HepG2 (cell line): ENCODE measurements at regions of chr6 and their contacts with region 1.

Region 1: DNA sequence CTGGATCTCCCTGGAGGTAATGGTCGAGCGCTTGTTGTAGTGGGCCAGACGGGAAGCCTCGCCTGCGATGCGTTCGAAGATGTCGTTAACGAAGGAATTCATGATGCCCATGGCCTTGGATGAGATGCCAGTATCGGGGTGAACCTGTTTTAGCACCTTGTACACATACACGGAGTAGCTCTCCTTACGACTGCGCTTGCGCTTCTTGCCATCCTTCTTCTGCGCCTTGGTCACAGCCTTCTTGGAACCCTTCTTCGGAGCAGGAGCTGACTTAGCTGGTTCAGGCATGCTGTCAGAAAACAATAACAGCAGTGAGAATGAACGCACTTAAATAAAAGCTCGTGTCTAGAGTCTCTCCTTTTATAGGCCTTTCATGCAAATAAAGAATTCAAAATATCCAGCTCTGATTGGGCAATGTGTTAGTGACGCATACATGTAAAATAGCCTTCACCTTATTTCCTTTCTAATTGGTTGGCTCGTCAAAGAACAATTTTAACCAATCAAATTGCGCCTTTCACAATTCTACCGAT is 129.2 kb downstream of the HFE start:
- DNase-seq: peak; percentile 99
- ATAC-seq: peak; percentile 64
- H3K4me3 ChIP-seq: peak overlapping the region; percentile 60 to 75 (median 72)
- H3K27ac ChIP-seq: peak overlapping the region; percentile 89
- H3K4me1 ChIP-seq: peaks cover 30% of the 10 kb centered on the region
- H3K27me3 ChIP-seq: no peaks in the 10 kb centered on the region; a peak in 1 of 5 replicates
- CTCF ChIP-seq: no peak
- EP300 ChIP-seq: peak in 1 of 2 experiments; percentile 48; a peak in 1 of 4 replicates
- POLR2A ChIP-seq: peak; percentile 97 to 99
- RAD21 ChIP-seq: peak; percentile 26; the same call in 1 of the 2 replicates

Region 2: GRCh38 chr6:26031595-26032339 is 184.7 kb before region 1 on chr6:
- CTCF ChIA-PET with region 1: no interaction called
- POLR2A ChIA-PET with region 1: interaction called, 40 read pairs
- in situ Hi-C with region 1: no loop called
- intact Hi-C with region 1: no loop called
- DNase-seq: peak; percentile 100
- ATAC-seq: peak; percentile 79
- H3K4me3 ChIP-seq: peak overlapping the region; percentile 71 to 83 (median 82)
- H3K27ac ChIP-seq: peak overlapping the region; percentile 93
- H3K4me1 ChIP-seq: peaks cover 37% of the 10 kb centered on the region
- H3K27me3 ChIP-seq: no peaks in the 10 kb centered on the region; a peak in 1 of 5 replicates
- CTCF ChIP-seq: peak; percentile 52
- EP300 ChIP-seq: peak; percentile 40 to 80; a peak in 2 of 4 replicates
- POLR2A ChIP-seq: peak; percentile 99
- RAD21 ChIP-seq: peak; percentile 61

Region 3: DNA sequence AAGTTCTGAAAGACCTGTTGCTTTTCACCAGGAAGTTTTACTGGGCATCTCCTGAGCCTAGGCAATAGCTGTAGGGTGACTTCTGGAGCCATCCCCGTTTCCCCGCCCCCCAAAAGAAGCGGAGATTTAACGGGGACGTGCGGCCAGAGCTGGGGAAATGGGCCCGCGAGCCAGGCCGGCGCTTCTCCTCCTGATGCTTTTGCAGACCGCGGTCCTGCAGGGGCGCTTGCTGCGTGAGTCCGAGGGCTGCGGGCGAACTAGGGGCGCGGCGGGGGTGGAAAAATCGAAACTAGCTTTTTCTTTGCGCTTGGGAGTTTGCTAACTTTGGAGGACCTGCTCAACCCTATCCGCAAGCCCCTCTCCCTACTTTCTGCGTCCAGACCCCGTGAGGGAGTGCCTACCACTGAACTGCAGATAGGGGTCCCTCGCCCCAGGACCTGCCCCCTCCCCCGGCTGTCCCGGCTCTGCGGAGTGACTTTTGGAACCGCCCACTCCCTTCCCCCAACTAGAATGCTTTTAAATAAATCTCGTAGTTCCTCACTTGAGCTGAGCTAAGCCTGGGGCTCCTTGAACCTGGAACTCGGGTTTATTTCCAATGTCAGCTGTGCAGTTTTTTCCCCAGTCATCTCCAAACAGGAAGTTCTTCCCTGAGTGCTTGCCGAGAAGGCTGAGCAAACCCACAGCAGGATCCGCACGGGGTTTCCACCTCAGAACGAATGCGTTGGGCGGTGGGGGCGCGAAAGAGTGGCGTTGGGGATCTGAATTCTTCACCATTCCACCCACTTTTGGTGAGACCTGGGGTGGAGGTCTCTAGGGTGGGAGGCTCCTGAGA is 128.9 kb before region 1 on chr6 and contains the start of gene HFE:
- CTCF ChIA-PET with region 1: no interaction called
- POLR2A ChIA-PET with region 1: no interaction called
- in situ Hi-C with region 1: no loop called
- intact Hi-C with region 1: no loop called
- DNase-seq: peak; percentile 55
- ATAC-seq: peak; percentile 86
- H3K4me3 ChIP-seq: peak within 1 kb of the TSS; percentile 79 to 84 (median 84)
- H3K27ac ChIP-seq: peak within 1 kb of the TSS; percentile 72
- H3K4me1 ChIP-seq: peaks cover 31% of the 10 kb centered on the region
- H3K27me3 ChIP-seq: no peaks in the 10 kb centered on the region
- CTCF ChIP-seq: peak; percentile 24; the same call in 1 of the 2 replicates
- EP300 ChIP-seq: no peak
- POLR2A ChIP-seq: peak; percentile 20 to 55; a peak in 2 of 4 replicates
- RAD21 ChIP-seq: peak; percentile 9; the same call in 1 of the 2 replicates
- total RNA-seq, gene HFE: 1.9 and 3.7 TPM in 2 replicates

Region 4: GRCh38 chr6:26122793-26123674 is 93.4 kb before region 1 on chr6:
- CTCF ChIA-PET with region 1: no interaction called
- POLR2A ChIA-PET with region 1: interaction called, 184 read pairs
- in situ Hi-C with region 1: no loop called
- intact Hi-C with region 1: loop called (anchors 1 kb)
- DNase-seq: peak; percentile 100
- ATAC-seq: peak; percentile 71
- H3K4me3 ChIP-seq: peak overlapping the region; percentile 73 to 99 (median 83)
- H3K27ac ChIP-seq: peak overlapping the region; percentile 93
- H3K4me1 ChIP-seq: peaks cover 61% of the 10 kb centered on the region
- H3K27me3 ChIP-seq: no peaks in the 10 kb centered on the region; a peak in 2 of 5 replicates
- CTCF ChIP-seq: no peak
- EP300 ChIP-seq: peak; percentile 23 to 94; a peak in 2 of 4 replicates
- POLR2A ChIP-seq: peak; percentile 87 to 98
- RAD21 ChIP-seq: peak; percentile 49

Region 5: GRCh38 chr6:26196846-26197648 is 19.4 kb before region 1 on chr6:
- CTCF ChIA-PET with region 1: no interaction called
- POLR2A ChIA-PET with region 1: interaction called, 336 read pairs
- in situ Hi-C with region 1: no loop called
- intact Hi-C with region 1: loop called (anchors 2 kb)
- DNase-seq: peak; percentile 93
- ATAC-seq: peak; percentile 66
- H3K4me3 ChIP-seq: peak overlapping the region; percentile 81 to 90 (median 87)
- H3K27ac ChIP-seq: peak overlapping the region; percentile 94
- H3K4me1 ChIP-seq: peaks cover 30% of the 10 kb centered on the region
- H3K27me3 ChIP-seq: no peaks in the 10 kb centered on the region; a peak in 1 of 5 replicates
- CTCF ChIP-seq: peak; percentile 60
- EP300 ChIP-seq: peak; percentile 34 to 41; a peak in 2 of 4 replicates
- POLR2A ChIP-seq: peak; percentile 99
- RAD21 ChIP-seq: peak; percentile 53

Region 6: GRCh38 chr6:26272171-26272637 is 55.8 kb after region 1 on chr6:
- CTCF ChIA-PET with region 1: no interaction called
- POLR2A ChIA-PET with region 1: interaction called, 24 read pairs
- in situ Hi-C with region 1: no loop called
- intact Hi-C with region 1: no loop called
- DNase-seq: no peak
- ATAC-seq: peak; percentile 81
- H3K4me3 ChIP-seq: peak overlapping the region; percentile 54 to 73 (median 63)
- H3K27ac ChIP-seq: no peak overlapping the region
- H3K4me1 ChIP-seq: peaks cover 47% of the 10 kb centered on the region
- H3K27me3 ChIP-seq: peaks cover 4 to 24% of the 10 kb centered on the region in 2 experiments; a peak in 2 of 5 replicates
- CTCF ChIP-seq: peak; percentile 54
- EP300 ChIP-seq: no peak
- POLR2A ChIP-seq: no peak
- RAD21 ChIP-seq: no peak

Region 7: GRCh38 chr6:26322645-26323482 is 106.4 kb after region 1 on chr6:
- CTCF ChIA-PET with region 1: no interaction called
- POLR2A ChIA-PET with region 1: interaction called, 19 read pairs
- in situ Hi-C with region 1: no loop called
- intact Hi-C with region 1: no loop called
- DNase-seq: peak; percentile 93
- ATAC-seq: peak; percentile 64
- H3K4me3 ChIP-seq: peak overlapping the region; percentile 61 to 89 (median 78)
- H3K27ac ChIP-seq: peak overlapping the region; percentile 76
- H3K4me1 ChIP-seq: peaks cover 65% of the 10 kb centered on the region
- H3K27me3 ChIP-seq: no peaks in the 10 kb centered on the region; a peak in 1 of 5 replicates
- CTCF ChIP-seq: no peak
- EP300 ChIP-seq: no peak
- POLR2A ChIP-seq: no peak
- RAD21 ChIP-seq: no peak

Region 8: DNA sequence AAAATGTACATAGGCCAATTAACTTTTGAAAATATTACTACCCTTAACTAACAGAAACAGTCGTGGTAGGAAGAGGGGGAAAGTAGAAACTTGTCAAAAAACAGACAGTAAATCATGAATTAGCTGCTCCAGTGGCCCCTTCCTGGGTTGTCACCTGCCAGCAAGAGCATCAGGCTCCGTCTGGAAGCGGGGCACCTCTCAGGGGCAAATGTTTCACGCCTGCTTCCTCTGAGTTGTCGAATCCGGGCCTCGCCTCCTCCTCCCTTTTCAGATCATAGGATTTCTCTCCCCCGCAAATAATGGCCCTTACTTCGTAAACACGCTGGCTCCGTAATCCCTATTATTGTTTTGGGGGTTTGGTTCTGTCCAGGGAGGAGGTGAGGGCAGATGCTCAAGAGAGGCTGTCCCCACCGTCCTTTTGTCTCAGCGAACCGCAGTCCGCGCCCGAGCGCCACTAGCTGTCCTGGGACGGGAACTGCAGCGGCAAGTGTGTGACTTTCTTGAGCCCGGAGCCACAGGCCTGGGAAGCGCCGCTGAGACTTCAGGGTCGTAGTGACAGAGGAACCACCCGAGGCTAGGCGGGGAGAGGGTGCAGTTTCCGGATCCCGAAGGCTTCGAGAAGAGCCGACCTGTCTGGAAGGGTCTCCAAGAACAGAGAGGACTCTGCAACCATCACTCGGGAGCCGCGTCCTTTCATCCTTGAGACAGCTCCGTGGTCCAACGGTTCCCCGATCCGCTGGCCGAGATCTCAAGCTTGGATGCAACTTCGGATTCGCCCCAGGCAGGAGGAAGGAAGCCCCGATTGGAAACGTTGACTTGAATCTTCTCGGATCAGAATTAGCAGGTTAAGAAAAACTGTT is 1471.0 kb after region 1 on chr6:
- CTCF ChIA-PET with region 1: no interaction called
- POLR2A ChIA-PET with region 1: no interaction called
- in situ Hi-C with region 1: no loop called
- intact Hi-C with region 1: no loop called
- DNase-seq: peak; percentile 79
- ATAC-seq: peak; percentile 85
- H3K4me3 ChIP-seq: peak overlapping the region; percentile 65 to 93 (median 78)
- H3K27ac ChIP-seq: peak overlapping the region; percentile 15
- H3K4me1 ChIP-seq: peaks cover 56% of the 10 kb centered on the region
- H3K27me3 ChIP-seq: no peaks in the 10 kb centered on the region; a peak in 1 of 5 replicates
- CTCF ChIP-seq: peak; percentile 95
- EP300 ChIP-seq: no peak
- POLR2A ChIP-seq: no peak
- RAD21 ChIP-seq: peak; percentile 70